ENCODE measurements at regions of chr19 and their contacts with region 1.

Region 1: DNA sequence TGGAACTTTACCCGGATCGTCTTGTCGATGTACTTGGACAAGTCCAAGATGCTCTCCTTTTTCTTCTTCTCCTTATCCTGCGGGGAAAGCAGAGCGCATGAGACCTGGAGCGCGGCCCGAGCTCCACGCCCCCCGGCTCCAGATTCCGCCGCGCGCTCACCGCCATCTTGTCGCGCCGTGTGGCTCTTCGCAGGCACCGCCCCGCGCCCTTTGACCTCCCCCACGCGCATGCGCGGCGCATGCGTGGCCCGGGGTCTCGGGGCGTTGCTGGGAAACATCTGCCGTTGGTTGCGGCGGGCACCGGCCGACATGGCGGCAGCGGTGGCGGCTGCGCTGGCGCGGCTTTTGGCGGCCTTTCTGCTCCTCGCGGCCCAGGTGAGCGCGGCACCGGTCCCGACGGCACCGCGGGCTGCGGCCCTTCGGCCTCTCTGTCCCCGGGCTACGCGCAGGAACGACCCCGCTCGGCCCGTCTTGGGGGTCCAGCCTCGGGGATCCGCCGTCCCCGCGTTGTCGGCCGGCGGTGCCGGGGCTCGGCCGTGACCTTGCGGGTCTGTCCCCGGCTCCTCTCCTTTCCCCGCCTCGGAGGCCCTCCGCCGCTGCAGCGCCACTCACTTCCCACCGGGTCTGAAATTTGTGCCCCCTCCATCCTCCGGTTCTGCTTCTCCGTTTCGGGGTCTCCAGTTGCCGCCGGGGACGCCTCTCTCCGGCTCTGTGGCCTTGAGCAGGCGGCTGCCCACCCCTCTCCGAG is at the starts of genes LSM7 and SPPL2B:
- DNase-seq: peak; percentile 93
- H3K4me3 Mint-ChIP-seq: peak within 1 kb of the TSS; percentile 98
- H3K27ac Mint-ChIP-seq: peak within 1 kb of the TSS; percentile 99
- H3K4me1 Mint-ChIP-seq: peaks cover 63% of the 10 kb centered on the region
- H3K27me3 Mint-ChIP-seq: no peaks in the 10 kb centered on the region
- total RNA-seq, gene LSM7: 110 to 115 TPM
- total RNA-seq, gene SPPL2B: 58.9 to 68.2 TPM

Region 2: GRCh38 chr19:2236314-2237050 is 92.1 kb before region 1 on chr19 and contains the starts of genes PLEKHJ1 and SF3A2:
- CTCF ChIA-PET with region 1: no interaction called
- POLR2A ChIA-PET with region 1: interaction called, 10 read pairs
- DNase-seq: peak; percentile 98
- H3K4me3 Mint-ChIP-seq: peak within 1 kb of the TSS; percentile 94
- H3K27ac Mint-ChIP-seq: peak within 1 kb of the TSS; percentile 96
- H3K4me1 Mint-ChIP-seq: peaks cover 68% of the 10 kb centered on the region
- H3K27me3 Mint-ChIP-seq: no peaks in the 10 kb centered on the region
- total RNA-seq, gene PLEKHJ1: 58.3 to 60.4 TPM
- total RNA-seq, gene SF3A2: 137 to 145 TPM

Region 3: DNA sequence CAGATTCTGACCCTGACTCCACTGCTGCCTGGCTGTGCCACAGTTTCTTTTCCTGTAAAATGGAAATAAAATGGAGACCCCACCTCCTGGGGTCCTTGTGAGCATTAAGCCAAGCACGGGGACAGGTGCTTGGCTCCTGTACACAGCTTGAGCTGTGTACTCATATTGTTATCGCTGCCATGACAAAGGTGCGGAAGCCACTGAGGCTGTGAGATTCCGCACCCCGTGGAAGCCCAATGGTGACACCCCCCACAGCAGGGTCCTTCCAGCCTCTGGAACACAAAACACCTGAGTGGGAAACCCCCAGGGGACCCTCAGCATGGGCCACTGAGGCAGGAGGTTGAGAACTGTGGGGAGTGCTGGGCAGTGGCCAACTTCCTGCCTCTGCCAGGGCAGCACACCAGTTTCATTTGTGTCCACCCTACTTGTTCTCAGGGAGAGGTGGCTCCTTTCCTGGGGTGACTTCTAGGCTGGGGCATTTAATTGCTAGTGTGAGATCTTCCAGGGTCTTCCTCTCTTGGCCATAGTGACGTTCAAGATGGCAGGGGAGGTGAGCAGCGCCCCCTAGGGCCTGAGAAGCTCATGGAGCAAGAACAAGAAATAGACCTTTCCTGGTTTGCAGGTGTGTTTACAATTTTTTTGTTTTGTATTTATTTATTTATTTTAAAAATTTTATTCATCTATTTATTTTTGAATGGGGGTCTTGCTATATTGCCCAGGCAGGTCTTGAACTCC is 67.0 kb before region 1 on chr19:
- CTCF ChIA-PET with region 1: no interaction called
- POLR2A ChIA-PET with region 1: interaction called, 16 read pairs
- DNase-seq: peak; percentile 76
- H3K4me3 Mint-ChIP-seq: no peak overlapping the region
- H3K27ac Mint-ChIP-seq: peak overlapping the region; percentile 48
- H3K4me1 Mint-ChIP-seq: peaks cover 41% of the 10 kb centered on the region
- H3K27me3 Mint-ChIP-seq: no peaks in the 10 kb centered on the region

Region 4: DNA sequence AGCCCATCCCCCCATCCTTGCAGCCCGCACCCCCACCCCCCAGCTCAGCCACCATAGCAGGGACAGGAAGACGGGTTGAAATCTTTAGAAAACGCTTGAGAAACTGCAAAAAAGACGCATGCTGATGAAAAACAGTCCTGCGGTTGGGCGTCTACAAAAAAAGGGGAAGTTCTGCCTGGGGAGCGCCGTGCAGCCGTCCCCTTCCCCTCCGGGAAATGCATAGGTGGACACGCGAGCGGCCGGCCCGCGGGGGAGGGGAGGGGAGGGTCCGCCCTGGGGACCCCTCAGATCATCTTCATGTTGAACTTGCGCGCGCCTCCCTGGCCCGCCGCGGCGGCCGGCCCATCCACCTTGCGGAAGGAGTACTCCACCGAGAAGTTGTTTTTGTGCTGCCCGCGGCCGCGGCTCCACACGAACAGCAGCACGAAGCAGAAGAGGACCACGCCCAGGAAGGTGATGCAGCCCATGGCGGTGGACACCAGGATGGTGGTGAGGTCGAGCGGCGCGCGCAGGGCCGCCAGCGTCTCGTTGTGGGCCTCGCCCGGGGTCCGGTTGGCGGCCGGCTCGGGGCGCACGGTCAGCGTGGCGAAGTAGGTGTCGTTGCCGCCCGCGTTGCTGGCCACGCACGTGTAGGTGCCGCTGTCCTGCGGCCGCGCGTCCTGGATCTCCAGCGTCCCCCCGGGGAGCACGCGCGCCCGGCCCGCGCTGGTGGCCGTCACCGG is 38.7 kb before region 1 on chr19:
- CTCF ChIA-PET with region 1: no interaction called
- POLR2A ChIA-PET with region 1: interaction called, 14 read pairs
- DNase-seq: peak; percentile 81
- H3K4me3 Mint-ChIP-seq: peak overlapping the region; percentile 83
- H3K27ac Mint-ChIP-seq: peak overlapping the region; percentile 94
- H3K4me1 Mint-ChIP-seq: peaks cover 31% of the 10 kb centered on the region
- H3K27me3 Mint-ChIP-seq: peaks cover 4% of the 10 kb centered on the region

Region 5: GRCh38 chr19:2394442-2395292 is 66.1 kb after region 1 on chr19:
- CTCF ChIA-PET with region 1: no interaction called
- POLR2A ChIA-PET with region 1: interaction called, 11 read pairs
- DNase-seq: no peak
- H3K4me3 Mint-ChIP-seq: peak overlapping the region; percentile 56
- H3K27ac Mint-ChIP-seq: peak overlapping the region; percentile 68
- H3K4me1 Mint-ChIP-seq: peaks cover 25% of the 10 kb centered on the region
- H3K27me3 Mint-ChIP-seq: peaks cover 9% of the 10 kb centered on the region

Region 6: DNA sequence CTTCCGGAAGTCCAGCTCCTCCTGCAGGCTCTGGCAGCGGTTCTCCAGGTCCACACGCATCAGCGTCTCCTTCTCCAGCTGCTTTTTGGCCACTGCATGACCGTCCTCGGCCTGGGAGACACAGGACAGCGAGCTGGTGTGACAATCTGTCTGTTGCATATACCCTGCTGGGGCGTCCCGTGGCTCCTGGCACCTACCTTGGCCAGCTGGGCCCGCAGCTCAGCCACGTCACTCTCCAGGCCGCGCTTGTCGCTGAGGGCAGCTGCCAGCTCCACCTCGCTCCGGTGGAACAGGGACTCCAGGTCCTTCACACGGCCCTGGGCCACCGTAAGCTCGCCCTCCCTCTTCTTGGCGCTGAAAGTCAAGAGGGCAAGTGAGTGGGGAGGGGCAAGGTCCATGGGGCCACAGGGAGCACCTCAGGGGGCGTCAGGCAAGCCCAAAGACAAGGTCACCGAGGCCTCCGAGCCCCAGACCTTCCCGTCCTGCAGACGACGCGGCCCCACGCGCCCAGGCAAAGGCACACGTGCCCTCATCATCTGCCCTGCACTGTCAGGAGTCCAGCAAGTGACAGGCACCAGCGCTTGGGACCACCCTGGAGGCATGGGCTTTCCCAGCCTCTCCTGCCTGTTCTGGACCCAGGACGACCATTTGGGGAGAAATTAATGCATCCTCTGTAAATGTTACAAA is 109.7 kb after region 1 on chr19:
- CTCF ChIA-PET with region 1: no interaction called
- POLR2A ChIA-PET with region 1: no interaction called
- DNase-seq: no peak
- H3K4me3 Mint-ChIP-seq: no peak overlapping the region
- H3K27ac Mint-ChIP-seq: no peak overlapping the region
- H3K4me1 Mint-ChIP-seq: peaks cover 2% of the 10 kb centered on the region
- H3K27me3 Mint-ChIP-seq: no peaks in the 10 kb centered on the region